OCI-LY7 (cell line): ENCODE measurements at regions of chr2 and their contacts with region 1.

Region 1: DNA sequence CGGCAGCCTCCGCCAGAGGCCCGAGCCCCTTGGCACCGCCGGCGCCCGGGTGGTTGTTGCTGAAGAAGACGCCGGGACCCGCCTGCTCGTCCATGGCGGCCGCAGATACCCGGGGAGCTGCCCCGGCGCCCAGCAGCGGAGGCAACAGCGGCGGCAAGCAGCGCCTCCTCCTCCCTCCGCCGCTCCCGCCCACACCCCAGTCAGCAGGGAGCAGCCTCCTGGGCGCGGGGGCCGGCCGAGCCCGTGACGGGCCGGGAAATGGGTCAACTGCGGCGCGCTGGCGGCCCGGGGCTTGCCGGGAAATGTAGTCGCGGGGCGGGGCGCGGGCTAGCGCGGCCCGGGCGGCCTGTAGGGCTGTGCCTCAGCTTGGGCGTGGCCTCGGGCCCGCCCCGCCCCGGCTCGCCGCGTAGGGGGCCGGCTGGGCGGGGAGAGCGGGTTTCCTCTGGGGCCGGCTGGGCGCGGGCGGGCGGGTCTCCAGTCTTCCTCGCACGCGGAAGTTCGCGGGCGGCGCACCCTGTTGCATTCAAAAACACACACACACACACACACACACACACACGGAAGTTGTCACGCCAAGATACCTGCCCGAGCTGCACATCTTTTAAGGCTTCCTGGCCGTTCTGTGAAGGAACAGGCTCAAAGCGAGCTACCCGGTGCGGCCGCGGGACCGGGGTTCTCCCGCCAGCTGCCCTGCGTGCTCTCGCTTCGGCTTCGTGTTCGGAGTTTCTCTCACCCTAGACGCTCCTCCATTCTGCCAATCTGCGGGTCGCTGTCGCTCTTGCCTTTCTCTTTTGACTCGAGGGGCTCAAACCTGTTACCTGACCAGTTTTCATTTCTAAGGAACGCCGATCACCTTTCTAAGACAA is at the start of gene STRN:
- DNase-seq: peak; percentile 97
- H3K4me3 ChIP-seq: peak within 1 kb of the TSS; percentile 94
- H3K27ac ChIP-seq: peak within 1 kb of the TSS; percentile 59
- H3K4me1 ChIP-seq: peaks cover 30% of the 10 kb centered on the region
- CTCF ChIP-seq: no peak
- total RNA-seq, gene STRN: 16.0 and 16.1 TPM in 2 replicates

Region 2: GRCh38 chr2:36680012-36680411 is 286.6 kb before region 1 on chr2:
- CTCF ChIA-PET with region 1: no interaction called
- POLR2A ChIA-PET with region 1: no interaction called
- intact Hi-C with region 1: no loop called
- DNase-seq: no peak
- H3K4me3 ChIP-seq: no peak overlapping the region
- H3K27ac ChIP-seq: no peak overlapping the region
- H3K4me1 ChIP-seq: no peaks in the 10 kb centered on the region
- CTCF ChIP-seq: no peak

Region 3: GRCh38 chr2:36902385-36903120 is 64.0 kb before region 1 on chr2:
- CTCF ChIA-PET with region 1: no interaction called
- POLR2A ChIA-PET with region 1: no interaction called
- intact Hi-C with region 1: loop called (anchors 2 kb)
- DNase-seq: no peak
- H3K4me3 ChIP-seq: no peak overlapping the region
- H3K27ac ChIP-seq: no peak overlapping the region
- H3K4me1 ChIP-seq: no peaks in the 10 kb centered on the region
- CTCF ChIP-seq: no peak

Region 4: DNA sequence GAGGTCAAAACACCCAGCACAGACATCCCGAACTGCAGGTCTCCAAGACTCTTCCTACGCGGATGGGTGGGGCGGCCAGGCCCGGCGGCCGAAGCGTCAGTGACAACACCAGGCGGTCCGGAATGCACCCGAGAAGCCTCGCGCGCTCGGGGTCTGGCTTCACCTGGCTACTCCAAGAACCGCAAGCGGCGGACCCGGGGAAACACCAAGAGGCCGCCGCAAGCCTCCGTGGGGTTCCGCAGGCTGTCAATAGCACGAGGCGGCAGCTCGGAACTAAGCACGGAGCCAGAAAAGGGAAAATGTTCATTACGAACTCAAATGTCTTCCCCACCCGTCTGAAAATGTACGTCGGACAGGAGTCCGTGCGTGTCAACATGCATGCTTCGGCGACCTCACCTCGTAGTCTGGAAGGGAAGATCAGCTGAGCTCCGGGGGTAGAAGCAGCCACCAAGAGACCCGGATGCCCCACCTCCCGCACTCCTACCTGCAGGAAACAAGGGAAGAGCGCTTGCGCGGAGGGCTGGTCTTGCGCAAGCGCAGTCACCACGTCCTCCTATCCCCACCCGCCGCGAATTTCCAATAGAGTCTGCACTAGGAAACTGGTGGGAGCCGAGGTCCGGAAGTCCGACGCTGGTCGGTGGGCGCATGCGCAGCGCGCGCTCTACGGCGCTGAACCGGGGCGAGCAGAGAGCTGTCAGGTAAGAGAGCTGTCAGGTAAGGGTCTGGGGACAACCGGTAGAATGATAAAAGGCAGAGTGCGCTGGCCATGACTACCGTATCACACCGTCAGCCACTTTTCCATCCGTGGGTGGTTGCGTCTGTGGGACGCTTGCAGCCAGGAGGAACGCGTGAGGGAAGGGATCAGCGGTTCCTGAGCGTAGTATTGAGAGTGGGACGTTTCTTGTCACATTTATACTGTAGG is 117.5 kb after region 1 on chr2 and contains the starts of genes GPATCH11 and HEATR5B:
- CTCF ChIA-PET with region 1: no interaction called
- POLR2A ChIA-PET with region 1: interaction called, 3 read pairs
- intact Hi-C with region 1: loop called (anchors 5 kb)
- DNase-seq: peak; percentile 97
- H3K4me3 ChIP-seq: peak within 1 kb of the TSS; percentile 80
- H3K27ac ChIP-seq: peak within 1 kb of the TSS; percentile 52
- H3K4me1 ChIP-seq: peaks cover 62% of the 10 kb centered on the region
- CTCF ChIP-seq: no peak
- total RNA-seq, gene GPATCH11: 11.6 and 21.2 TPM in 2 replicates
- total RNA-seq, gene HEATR5B: 23.8 TPM in 2 replicates

Region 5: GRCh38 chr2:37196320-37197195 is 230.0 kb after region 1 on chr2 and contains the start of gene CEBPZOS:
- CTCF ChIA-PET with region 1: no interaction called
- POLR2A ChIA-PET with region 1: interaction called, 3 read pairs
- intact Hi-C with region 1: loop called (anchors 5 kb)
- DNase-seq: peak; percentile 88
- H3K4me3 ChIP-seq: peak within 1 kb of the TSS; percentile 79
- H3K27ac ChIP-seq: peak within 1 kb of the TSS; percentile 56
- H3K4me1 ChIP-seq: peaks cover 23% of the 10 kb centered on the region
- CTCF ChIP-seq: peak; percentile 33; the same call in 1 of the 2 replicates
- total RNA-seq, gene CEBPZOS: 19.2 and 31.1 TPM in 2 replicates

Region 6: DNA sequence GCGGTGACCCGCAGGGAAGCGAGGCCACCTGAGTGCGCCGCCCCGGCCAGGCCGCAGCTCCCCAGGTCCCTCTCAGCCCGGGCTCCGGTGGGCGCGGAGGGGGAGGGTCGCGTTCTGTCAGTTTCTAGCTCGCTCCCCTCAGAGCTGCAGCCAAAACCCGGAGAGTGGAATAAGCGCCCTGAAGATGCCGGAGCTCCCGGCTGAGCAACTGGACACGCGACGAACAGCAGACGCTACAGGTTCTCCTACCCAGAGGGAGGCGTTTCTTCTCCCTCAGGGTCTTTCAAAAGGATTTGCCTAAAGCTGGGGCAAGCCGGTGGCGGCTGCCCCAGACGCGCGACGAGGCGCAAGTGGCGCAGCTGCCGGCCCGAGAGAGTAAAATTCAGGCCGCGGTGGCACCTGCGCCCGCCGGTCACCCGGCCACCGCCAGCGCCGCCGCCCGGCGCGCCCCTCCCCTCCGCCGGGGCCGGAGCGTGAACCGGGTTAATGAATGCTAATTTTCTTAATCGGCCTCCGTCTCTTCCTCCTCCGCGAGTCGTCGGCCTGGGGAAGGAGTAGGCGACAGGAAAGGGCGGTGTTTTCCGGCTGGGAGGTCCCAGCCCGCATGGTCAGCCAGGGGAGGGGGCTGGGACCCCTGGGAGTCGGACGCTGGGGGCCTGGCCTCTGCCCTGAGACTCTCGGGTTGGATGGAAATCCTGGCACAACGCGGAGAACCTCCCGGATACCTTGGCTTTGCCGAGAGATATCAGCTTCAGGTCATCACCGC is 705.7 kb after region 1 on chr2:
- CTCF ChIA-PET with region 1: no interaction called
- POLR2A ChIA-PET with region 1: no interaction called
- intact Hi-C with region 1: loop called (anchors 5 kb)
- DNase-seq: peak; percentile 88
- H3K4me3 ChIP-seq: peak overlapping the region; percentile 94
- H3K27ac ChIP-seq: peak overlapping the region; percentile 59
- H3K4me1 ChIP-seq: peaks cover 44% of the 10 kb centered on the region
- CTCF ChIP-seq: no peak